Uterus (tissue), 4 donors: ENCODE measurements at regions of chr15 and their contacts with region 1.

Region 1: DNA sequence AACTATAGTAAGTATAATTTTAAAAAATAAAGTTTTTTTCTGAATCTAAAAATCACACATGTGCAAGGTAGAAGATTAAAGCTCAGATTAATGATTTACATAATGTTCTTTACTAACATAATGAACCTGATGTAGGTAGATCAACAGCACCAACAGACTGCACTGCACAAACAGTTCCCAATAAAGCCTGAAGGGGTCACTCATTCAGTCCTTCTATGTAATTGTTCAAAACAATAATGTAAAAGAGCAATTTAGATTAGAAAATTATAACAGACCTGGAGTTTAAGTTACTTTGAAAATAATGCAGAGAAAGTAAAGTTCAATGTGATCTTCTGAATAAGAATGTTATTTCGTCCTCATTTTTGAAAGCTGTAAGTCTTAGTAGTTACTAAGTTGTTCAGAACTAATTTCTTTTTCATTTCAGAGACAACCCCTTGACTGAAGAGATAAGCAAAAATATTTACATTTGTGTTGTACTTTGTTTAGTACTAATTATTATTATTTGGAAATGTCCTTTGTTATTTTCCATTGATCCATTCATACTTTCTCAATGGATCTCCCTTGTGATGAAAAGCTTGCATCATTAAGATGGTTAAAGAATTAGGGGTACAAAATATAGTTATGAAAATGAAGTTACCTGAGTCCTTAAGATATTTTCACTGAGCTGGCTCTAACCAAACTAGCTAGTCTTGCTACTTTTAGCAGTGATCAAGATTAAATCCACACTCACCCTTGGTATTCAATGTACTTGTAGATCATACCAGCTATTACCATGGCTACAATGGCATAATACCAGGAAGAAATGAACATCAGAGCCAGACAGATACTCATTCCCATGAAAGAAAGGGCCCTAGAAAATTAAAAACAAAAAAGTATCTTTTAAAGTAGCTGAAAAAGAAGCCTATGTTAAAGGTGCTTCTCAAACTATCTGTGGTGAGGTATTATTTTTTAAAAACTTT is 16.8 kb downstream of the EMC4 start:
- DNase-seq: peak in 1 of 2 donors; percentile 25
- H3K4me3 ChIP-seq: no peak overlapping the region
- H3K27ac ChIP-seq: no peak overlapping the region
- H3K4me1 ChIP-seq: no peaks in the 10 kb centered on the region
- H3K27me3 ChIP-seq: no peaks in the 10 kb centered on the region
- CTCF ChIP-seq: peak; percentile 53 to 70 (median 60)
- POLR2A ChIP-seq: no peak

Region 2: GRCh38 chr15:34271493-34271892 is 29.8 kb after region 1 on chr15:
- intact Hi-C with region 1: loop called (anchors 2 kb)
- DNase-seq: peak; percentile 40 to 72
- H3K4me3 ChIP-seq: no peak overlapping the region
- H3K27ac ChIP-seq: no peak overlapping the region
- H3K4me1 ChIP-seq: no peaks in the 10 kb centered on the region
- H3K27me3 ChIP-seq: no peaks in the 10 kb centered on the region
- CTCF ChIP-seq: no peak
- POLR2A ChIP-seq: no peak

Region 3: GRCh38 chr15:34520566-34520965 is 278.9 kb after region 1 on chr15:
- intact Hi-C with region 1: no loop called
- DNase-seq: no peak
- H3K4me3 ChIP-seq: no peak overlapping the region
- H3K27ac ChIP-seq: no peak overlapping the region
- H3K4me1 ChIP-seq: no peaks in the 10 kb centered on the region
- H3K27me3 ChIP-seq: no peaks in the 10 kb centered on the region
- CTCF ChIP-seq: no peak
- POLR2A ChIP-seq: no peak

Region 4: DNA sequence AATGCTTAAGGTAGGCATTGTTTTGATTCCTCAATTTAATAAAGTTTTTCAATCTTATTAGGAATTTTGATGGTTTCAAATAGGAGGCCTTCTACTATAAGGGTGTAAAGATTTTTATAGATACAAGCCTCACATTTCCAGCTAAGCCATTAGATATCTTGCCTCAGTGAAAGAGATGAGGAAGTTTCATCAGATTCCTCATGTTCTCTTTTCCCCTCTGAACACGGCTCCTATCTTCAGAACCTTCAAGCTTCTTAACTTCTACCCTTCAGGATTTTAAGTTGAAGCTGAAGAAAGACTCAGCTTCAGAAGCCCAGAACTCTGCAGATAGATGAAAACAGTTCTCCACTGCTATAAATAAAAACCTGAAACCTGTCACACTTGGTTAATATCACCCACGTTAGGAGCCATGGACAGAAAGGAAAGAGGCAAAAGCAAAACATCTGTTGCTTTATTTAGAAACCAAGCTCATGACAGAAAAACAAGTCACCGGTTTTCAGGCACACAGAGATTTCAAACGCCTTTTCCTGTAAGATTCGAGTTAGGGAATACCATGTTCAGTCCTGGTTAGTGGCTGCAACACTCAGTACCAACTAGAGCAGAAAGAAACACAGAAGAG is 424.0 kb after region 1 on chr15:
- intact Hi-C with region 1: no loop called
- DNase-seq: no peak
- H3K4me3 ChIP-seq: no peak overlapping the region
- H3K27ac ChIP-seq: no peak overlapping the region
- H3K4me1 ChIP-seq: no peaks in the 10 kb centered on the region
- H3K27me3 ChIP-seq: no peaks in the 10 kb centered on the region
- CTCF ChIP-seq: no peak
- POLR2A ChIP-seq: no peak